GM23248 (cell line): ENCODE measurements at regions of chr5 and their contacts with region 1.

Region 1: DNA sequence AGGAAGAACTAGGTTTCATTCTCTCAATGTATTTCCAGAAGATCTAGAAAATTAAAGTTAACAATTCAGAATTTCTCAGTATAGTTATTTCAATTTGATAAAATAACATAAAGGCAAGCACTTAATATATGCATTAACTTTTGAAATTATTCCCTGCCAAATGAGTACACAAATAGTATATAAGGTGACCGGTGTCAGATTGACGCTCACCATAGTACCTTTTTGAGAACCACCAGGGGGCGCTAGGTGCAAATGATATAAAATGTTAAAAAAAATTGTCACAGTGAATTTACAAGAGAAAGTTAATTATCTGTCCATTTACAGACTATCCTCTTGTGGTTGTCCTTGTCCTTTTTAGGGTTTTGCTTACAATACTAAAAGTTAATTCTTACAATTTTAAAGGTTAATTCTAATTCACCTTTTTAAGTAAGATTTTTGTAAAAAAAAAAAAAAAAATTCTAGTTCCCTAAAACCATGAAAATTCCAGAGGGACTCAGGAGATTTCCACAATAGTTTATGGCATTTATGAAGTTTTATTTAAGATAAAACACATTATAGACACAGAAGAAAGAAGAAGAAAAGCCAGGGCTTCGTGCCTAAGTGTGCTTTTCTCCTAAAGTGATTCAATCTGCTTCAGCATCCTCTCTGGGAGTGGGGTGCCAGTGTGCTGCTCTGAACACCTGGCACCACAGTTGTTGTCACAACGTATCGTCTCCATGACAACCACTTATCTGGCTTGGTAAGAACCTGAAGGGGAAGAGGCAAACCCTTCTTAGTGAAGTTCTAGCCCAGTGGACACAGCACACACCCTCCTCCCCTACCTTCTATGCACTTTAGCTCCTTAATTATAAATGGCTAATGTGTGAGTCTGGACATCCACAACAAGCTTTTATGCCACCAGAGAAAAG is 1.7 kb downstream of the ADAMTS16 start:
- DNase-seq: peak; percentile 76
- H3K4me3 ChIP-seq: no peak overlapping the region
- H3K27ac ChIP-seq: no peak overlapping the region
- H3K4me1 ChIP-seq: peaks cover 8% of the 10 kb centered on the region; the same call in 1 of the 2 replicates
- H3K27me3 ChIP-seq: peaks cover 21% of the 10 kb centered on the region

Region 2: GRCh38 chr5:5409151-5409810 is 267.4 kb after region 1 on chr5:
- in situ Hi-C with region 1: loop called (anchors 10 kb)
- DNase-seq: no peak
- H3K4me3 ChIP-seq: no peak overlapping the region
- H3K27ac ChIP-seq: no peak overlapping the region
- H3K4me1 ChIP-seq: no peaks in the 10 kb centered on the region
- H3K27me3 ChIP-seq: no peaks in the 10 kb centered on the region

Region 3: DNA sequence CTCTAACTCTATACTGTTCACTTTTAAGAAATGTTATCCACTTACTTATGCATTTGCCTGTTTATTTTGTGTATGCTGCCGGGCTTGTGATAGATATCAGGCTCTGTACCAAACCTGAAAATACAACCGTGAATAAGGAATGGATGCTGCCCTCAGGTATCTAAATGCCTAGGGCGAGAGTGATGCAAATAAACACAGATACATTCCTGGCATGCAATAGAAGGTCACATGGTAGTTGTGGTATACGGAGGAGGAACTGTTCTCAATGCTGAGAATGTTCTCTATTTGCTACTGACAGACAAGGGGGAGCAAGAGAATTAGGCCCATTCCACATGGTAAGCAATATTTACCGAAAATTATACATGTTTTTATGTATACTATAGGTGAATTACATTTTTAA is 508.4 kb after region 1 on chr5:
- in situ Hi-C with region 1: no loop called
- DNase-seq: no peak
- H3K4me3 ChIP-seq: no peak overlapping the region
- H3K27ac ChIP-seq: no peak overlapping the region
- H3K4me1 ChIP-seq: no peaks in the 10 kb centered on the region
- H3K27me3 ChIP-seq: no peaks in the 10 kb centered on the region